Activated T-helper 1 cell treated with anti-CD3 and anti-CD28 coated beads, Interleukin-12 subunit alpha, Interleukin-12 subunit beta, Interleukin-2, Interleukin-4 antibody, amounts not matched to agents 30 ng/mL and 10 ng/mL and 1 ng/mL, durations not matched to agents 14 hours and 24 hours and 36 hours (primary cell): ENCODE measurements at regions of chr1 and their contacts with region 1.

Region 1: DNA sequence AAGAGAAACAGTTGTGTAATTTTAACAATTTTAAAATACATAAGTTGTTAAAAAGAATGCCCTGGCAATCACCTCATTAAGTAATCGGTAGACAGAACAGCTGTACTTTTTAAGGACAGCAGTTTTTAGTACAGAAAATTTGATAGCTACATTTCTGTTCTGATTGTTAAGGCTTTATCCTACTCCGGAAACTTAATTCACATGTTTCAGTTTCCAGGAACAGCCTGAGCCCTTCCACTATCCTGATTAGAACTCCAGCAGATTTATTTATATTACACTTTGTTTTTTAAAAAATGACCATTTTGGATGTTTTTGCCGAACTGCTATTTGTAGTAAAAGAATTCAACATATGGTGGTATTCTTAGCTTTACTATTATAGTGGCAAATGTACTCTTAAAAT is 8.7 kb downstream of the PRRC2C start:
- DNase-seq: no peak
- H3K4me3 Mint-ChIP-seq: no peak overlapping the region
- H3K27ac Mint-ChIP-seq: no peak overlapping the region
- H3K4me1 Mint-ChIP-seq: peaks cover 72% of the 10 kb centered on the region
- H3K27me3 Mint-ChIP-seq: no peaks in the 10 kb centered on the region

Region 2: DNA sequence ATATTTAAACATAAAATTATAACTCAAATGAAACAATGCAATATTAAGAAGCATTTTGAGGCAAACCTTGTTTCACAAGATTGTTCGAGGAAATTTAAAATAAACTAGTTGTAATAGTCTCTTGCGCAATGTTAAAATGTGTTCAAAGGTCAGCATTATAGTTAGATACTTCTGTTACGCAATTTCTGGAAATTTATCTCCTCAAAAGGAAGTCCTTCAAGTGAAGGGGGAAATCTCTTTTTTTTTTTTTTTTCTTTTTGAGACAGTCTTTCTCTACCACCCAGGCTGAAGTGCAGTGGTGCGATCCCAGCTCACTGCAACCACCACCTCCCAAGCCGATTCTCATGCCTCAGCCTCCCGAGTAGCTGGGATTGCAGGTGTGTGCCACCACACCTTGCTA is 128.0 kb before region 1 on chr1:
- intact Hi-C with region 1: no loop called
- DNase-seq: no peak
- H3K4me3 Mint-ChIP-seq: no peak overlapping the region
- H3K27ac Mint-ChIP-seq: no peak overlapping the region
- H3K4me1 Mint-ChIP-seq: no peaks in the 10 kb centered on the region
- H3K27me3 Mint-ChIP-seq: peaks cover 8% of the 10 kb centered on the region

Region 3: DNA sequence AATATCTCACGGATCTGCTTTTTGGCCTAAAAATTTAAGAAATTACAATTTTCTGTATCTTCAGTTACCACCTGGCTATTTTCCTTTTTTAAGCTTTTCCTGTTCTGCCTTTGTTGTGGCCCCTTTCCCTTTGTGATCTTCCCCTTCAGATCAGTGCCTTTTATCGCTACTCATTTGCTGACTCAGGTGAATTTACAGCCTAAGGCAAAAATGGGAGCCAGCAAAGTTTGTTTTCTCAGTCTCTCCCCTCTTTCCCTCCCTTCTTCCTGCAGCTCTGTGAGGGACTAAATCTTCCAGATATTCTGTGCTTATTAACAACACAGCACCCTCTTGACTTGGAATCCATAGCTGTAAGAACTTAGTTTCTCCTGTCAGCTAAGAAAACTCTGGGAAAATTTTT is 14.0 kb before region 1 on chr1:
- intact Hi-C with region 1: no loop called
- DNase-seq: no peak
- H3K4me3 Mint-ChIP-seq: no peak overlapping the region
- H3K27ac Mint-ChIP-seq: no peak overlapping the region
- H3K4me1 Mint-ChIP-seq: peaks cover 8% of the 10 kb centered on the region
- H3K27me3 Mint-ChIP-seq: peaks cover 3% of the 10 kb centered on the region

Region 4: GRCh38 chr1:171506525-171507304 is 12.6 kb after region 1 on chr1:
- intact Hi-C with region 1: loop called (anchors 1 kb)
- DNase-seq: no peak
- H3K4me3 Mint-ChIP-seq: no peak overlapping the region
- H3K27ac Mint-ChIP-seq: peak overlapping the region; percentile 74
- H3K4me1 Mint-ChIP-seq: peaks cover 84% of the 10 kb centered on the region
- H3K27me3 Mint-ChIP-seq: no peaks in the 10 kb centered on the region